Tibial artery (tissue), 4 donors: ENCODE measurements at regions of chr21 and their contacts with region 1.

Region 1: DNA sequence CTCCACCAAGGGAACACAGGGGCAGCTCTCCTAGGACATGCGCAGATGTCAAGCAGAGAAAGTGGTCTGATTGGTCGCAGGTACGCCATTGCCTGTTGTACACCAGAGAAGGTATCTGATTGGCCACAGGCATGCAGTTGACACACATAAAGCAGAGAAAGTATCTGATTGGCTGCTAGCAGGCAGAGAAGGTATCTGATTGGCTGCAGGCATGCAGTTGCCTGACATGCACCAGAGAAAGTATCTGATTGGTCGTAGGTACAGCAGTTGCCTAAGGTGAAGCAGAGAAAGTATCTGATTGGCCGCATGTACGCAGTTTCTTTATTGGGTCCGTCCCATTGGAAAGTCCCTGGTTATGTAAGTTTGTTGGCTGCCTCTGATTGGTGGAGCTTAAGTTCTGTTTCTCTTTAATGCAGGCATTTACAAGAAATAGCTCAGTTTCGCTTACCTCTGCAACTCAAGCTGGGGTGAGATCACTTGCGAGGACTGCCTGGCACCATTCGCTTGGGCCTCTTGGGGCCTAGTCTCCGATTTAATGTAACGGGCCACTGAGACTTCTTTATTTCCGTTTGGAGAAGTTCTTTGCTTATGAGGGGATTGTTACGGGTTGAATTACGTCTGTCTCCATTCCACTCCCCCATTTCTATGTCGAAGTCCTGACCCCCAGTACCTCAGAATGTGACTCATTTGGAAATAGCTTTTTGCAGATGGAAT is 74.2 kb downstream of the SIK1 start:
- DNase-seq: no peak
- H3K4me3 ChIP-seq: no peak overlapping the region
- H3K27ac ChIP-seq: no peak overlapping the region
- H3K4me1 ChIP-seq: peaks cover 0 to 6% (median 0%) of the 10 kb centered on the region in 4 donors
- H3K27me3 ChIP-seq: peaks cover 0 to 6% of the 10 kb centered on the region in 2 donors
- CTCF ChIP-seq: no peak

Region 2: GRCh38 chr21:42923541-42924432 is 428.9 kb before region 1 on chr21:
- intact Hi-C with region 1: no loop called
- DNase-seq: peak; percentile 79 to 85
- H3K4me3 ChIP-seq: no peak overlapping the region
- H3K27ac ChIP-seq: no peak overlapping the region
- H3K4me1 ChIP-seq: peaks cover 0 to 10% (median 3%) of the 10 kb centered on the region in 4 donors
- H3K27me3 ChIP-seq: no peaks in the 10 kb centered on the region
- CTCF ChIP-seq: peak; percentile 81 to 84

Region 3: DNA sequence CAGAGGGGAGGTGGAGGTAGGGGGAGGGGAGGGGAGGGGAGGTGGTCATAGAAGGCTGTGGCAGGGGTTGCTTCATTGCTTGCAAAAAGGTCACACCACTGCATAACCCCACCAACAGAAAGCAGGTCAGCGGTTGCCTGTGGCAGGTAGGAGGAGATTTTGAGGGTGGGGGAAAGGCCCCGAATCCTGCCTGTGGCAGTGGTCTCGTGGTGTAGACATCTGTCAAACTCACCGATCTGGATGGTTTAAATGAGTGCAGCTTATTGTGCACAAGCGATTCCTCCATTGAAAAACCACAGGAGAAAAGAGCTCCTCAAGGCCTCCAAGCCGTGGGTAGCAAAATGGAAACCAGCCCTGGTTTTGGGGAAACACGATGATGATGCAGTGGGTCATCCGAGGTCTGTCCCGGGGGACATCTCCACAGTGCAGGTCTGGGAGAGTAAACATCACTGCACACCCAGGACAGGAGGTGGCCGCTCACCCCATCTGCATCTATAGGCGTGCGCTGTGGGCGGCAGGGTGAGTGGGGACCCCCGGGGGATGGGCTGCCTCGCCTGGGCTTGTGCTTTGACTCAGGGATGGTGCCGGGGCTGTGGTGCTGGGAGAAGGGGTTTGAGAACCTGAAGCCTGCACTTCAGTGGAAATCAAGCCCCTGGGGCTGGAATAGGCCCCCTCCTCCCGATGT is 71.6 kb before region 1 on chr21:
- intact Hi-C with region 1: loop called (anchors 2 kb)
- DNase-seq: no peak
- H3K4me3 ChIP-seq: no peak overlapping the region
- H3K27ac ChIP-seq: no peak overlapping the region
- H3K4me1 ChIP-seq: no peaks in the 10 kb centered on the region
- H3K27me3 ChIP-seq: peaks cover 0 to 35% of the 10 kb centered on the region in 2 donors
- CTCF ChIP-seq: no peak

Region 4: DNA sequence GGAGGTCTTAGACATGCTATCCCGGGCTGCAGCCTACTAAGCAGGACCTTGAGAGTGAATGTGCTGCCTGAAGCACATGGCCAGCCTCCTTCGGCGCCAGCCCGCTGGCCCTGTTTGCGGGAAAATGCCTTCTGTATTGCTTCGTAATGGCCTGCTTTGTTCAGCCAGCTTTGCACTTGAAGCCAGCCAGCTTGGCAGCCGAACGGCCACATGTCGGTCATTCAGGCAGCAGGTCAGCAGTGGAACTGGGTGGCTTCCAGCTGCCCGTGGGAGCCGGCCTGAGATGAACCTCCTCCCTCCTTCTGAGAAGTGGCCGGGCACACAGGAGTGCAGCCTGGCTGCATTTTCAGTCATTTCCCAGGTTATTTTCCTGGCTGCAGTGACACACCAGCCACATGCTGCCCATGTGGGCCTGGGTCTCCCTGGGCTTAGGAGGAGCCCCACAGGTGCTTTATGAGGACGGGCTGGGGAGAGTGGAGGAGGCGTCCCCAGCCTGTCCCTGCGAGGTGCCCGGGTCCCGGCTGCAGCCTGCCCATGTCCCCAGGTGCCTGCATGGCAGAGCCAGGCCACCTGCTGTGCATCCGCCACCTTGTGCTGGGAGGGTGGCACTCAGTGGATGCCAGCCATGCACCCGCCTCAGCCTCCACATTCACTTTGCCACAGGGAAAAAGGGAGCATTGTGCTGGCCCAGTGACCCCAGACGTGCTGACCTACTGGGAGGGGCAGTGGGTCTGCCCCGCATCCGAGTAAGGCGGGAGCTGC is 29.3 kb before region 1 on chr21:
- intact Hi-C with region 1: no loop called
- DNase-seq: peak; percentile 61 to 95
- H3K4me3 ChIP-seq: no peak overlapping the region
- H3K27ac ChIP-seq: peak overlapping the region in 1 of 2 donors; percentile 61
- H3K4me1 ChIP-seq: peaks cover 0 to 45% (median 10%) of the 10 kb centered on the region in 4 donors
- H3K27me3 ChIP-seq: peaks cover 0 to 10% of the 10 kb centered on the region in 2 donors
- CTCF ChIP-seq: no peak